Right ventricle myocardium inferior (tissue), 1 donor: ENCODE measurements at regions of chr10 and their contacts with region 1.

Region 1: DNA sequence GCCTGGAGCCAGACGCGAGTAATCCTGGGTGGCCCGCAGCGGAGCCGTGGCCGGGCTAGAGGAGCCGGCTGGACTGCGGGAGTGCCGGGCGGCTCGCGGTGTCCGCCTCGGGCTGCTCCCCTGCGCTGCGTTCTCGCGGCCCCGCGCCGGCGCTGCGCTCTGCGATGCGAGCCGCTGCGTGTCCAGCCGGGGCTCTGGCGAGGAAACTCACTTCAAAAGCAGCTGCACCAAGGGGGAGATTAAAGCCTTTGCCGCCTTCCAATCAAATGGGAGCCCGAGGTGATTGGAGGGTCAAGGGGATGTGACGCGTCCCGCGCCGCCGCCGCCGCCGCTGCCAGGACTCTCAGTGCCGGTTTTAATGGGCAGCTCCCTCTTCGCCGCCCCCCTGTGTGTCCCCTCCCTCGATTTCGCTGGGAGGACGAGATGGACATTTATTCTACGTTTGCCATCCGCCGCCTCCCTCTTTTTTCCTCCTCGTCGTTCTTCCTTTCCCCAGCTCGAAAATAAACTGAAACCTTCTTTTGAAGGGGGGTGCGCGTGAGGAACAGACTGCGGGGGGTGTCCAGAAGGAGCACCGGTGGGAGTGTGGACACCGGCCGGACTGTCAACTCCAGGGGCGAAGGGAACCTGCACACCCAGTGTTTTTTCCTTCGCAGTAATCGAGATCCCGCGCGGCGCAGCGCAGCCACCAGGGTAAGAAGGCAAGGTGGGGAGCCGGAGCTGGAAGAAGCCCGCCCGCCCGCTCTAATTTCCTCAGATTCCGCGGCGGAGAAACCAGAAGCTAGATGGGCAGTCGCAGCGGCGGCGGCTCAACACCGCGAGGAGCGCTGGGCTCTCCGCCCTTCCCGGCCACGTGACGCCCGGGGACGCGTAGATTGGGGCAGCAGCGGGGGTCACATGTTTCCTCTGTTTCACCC is at the start of gene ZNF503:
- DNase-seq: peak; percentile 97
- ATAC-seq: peak; percentile 85
- total RNA-seq, gene ZNF503: 6.0 TPM

Region 2: GRCh38 chr10:75606203-75606779 is 204.5 kb after region 1 on chr10:
- intact Hi-C with region 1: loop called (anchors 5 kb)
- DNase-seq: no peak
- ATAC-seq: no peak

Region 3: GRCh38 chr10:75772153-75772887 is 370.5 kb after region 1 on chr10:
- intact Hi-C with region 1: loop called (anchors 5 kb)
- DNase-seq: no peak
- ATAC-seq: no peak

Region 4: GRCh38 chr10:76036111-76036940 is 634.5 kb after region 1 on chr10:
- intact Hi-C with region 1: loop called (anchors 2 kb)
- DNase-seq: peak; percentile 76
- ATAC-seq: peak; percentile 90

Region 5: DNA sequence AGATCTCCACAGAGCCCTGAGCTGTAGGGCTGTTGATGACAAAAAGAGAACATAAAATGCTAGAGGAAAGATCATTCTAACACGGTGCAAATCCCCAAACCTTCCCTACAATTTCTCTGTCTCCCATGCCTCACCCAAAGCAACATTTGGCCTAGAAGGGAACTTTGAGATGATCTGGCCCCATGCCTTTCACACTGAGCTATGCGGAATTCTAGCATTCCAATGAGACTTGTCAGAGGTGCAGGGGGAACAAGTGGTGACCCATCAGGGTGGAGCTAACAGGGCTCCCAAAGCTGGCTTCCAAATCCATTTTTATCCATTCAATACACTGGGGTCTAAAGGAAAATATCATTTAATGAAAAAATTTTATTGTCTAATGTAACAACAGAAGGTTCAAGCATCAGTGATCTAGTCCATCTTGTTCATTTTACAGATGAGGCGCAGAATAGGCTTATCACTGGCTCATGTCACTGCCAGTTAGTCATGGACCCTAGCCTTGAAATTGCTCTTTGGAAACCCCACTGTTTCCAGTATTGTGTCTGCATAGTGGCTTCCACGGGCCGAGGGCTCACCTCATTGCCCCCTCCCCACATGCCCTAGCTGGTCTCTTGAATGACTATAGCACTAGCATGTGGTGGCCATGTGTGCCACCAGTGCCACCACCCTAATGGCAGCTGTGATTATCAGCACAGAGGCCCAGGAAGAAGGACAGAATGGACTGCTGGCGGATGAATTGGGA is 1030.6 kb after region 1 on chr10:
- intact Hi-C with region 1: loop called (anchors 5 kb)
- DNase-seq: no peak
- ATAC-seq: peak; percentile 42

Region 6: DNA sequence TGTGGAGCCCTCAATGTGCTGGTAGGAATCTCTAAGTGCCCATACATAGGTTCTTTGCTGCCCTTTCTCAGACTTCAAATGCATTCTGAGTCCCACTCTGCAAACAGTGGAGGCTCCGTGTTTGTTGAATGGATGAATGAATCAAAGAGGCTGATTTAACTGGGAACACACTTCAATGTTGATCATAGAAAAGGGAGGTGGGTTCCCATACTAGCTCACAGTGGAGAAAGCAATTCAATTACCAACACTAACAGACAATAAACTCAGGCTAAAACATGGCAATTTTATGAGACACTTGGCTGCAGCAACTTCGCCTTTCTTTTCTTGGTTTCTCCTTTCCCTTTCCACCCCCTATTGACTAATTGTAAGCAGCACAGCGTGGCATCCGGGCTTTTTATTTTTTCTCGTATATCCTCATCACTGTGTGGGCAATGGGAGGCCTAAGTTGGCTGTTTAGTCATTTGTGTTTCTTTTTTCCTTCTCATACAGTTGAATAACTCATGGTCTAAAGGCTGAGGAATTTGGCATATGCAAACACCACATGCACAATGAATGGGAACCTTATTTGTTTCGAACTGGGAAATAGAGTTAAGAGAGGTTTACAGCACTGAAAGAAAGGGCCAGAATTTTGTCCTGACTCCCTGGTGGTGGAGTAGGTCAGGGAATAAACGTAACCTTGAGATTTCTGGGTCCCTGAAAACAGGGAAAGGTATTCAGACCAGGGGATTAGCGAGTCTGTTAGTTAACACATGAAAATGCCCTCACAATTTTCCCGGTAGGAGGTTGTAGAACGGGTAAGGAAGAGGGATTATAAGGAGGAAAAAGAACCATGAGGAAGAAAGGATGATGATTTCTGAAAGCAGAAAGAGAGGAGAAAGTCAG is 1377.3 kb after region 1 on chr10:
- intact Hi-C with region 1: loop called (anchors 5 kb)
- DNase-seq: no peak
- ATAC-seq: no peak

Region 7: GRCh38 chr10:77004917-77005564 is 1603.2 kb after region 1 on chr10:
- intact Hi-C with region 1: loop called (anchors 5 kb)
- DNase-seq: no peak
- ATAC-seq: peak; percentile 85